ENCODE measurements at regions of chr12 and their contacts with region 1.

Region 1: DNA sequence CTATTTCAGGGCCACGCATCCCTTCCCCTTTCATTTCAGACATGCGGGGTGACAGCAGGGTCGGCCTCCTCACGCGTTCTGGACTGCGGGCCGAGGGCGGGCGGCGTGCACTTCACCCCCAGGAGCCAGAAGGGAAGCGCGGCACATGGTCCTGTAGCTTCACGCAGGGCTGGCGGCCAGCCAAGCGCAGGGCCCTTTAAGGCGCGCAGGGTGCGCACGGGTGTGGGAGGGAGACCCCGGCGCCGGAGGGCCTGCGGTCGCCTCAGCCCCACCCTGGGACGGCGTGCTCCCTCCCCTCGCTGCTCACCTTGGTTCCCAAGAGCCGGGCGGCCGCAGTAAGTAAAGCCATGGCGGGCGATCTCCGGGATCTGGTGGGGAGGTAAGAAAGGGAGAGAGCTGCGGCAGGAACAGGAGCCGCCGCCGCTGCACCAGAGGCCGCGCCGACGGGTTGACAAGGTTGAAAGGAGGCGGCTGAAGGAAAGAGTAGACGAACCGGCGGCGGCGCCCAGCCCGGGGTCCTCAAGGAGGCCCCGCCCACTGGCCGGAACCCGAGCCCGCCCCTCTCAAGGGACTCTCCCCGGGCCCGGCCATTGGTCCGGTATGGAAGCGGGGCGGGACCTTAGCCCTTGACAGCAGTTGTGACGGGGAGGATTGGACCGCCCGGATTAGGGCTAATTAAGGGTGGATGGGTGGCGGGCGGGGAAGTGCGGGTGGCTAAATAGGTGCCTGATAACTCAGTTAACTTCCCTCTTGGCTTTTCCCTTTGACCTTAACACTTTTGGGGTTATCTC is at the start of gene CS:
- DNase-seq: peak; percentile 95 to 99 (median 98)
- ATAC-seq: peak; percentile 91
- H3K4me3 ChIP-seq: peak within 1 kb of the TSS; percentile 72
- H3K4me3 Mint-ChIP-seq: peak within 1 kb of the TSS; percentile 98
- H3K27ac ChIP-seq: peak within 1 kb of the TSS; percentile 91 to 96
- H3K27ac Mint-ChIP-seq: peak within 1 kb of the TSS; percentile 97
- H3K4me1 ChIP-seq: peaks cover 56% of the 10 kb centered on the region
- H3K4me1 Mint-ChIP-seq: peaks cover 68% of the 10 kb centered on the region
- H3K27me3 ChIP-seq: no peaks in the 10 kb centered on the region
- H3K27me3 Mint-ChIP-seq: no peaks in the 10 kb centered on the region
- CTCF ChIP-seq: no peak
- total RNA-seq, gene CS: 139 to 145 TPM

Region 2: GRCh38 chr12:56247923-56248322 is 52.1 kb before region 1 on chr12:
- CTCF ChIA-PET with region 1: no interaction called
- POLR2A ChIA-PET with region 1: no interaction called
- intact Hi-C with region 1: no loop called
- DNase-seq: no peak
- ATAC-seq: no peak
- H3K4me3 ChIP-seq: no peak overlapping the region
- H3K4me3 Mint-ChIP-seq: no peak overlapping the region
- H3K27ac ChIP-seq: no peak overlapping the region
- H3K27ac Mint-ChIP-seq: no peak overlapping the region
- H3K4me1 ChIP-seq: no peaks in the 10 kb centered on the region
- H3K4me1 Mint-ChIP-seq: no peaks in the 10 kb centered on the region
- H3K27me3 ChIP-seq: no peaks in the 10 kb centered on the region
- H3K27me3 Mint-ChIP-seq: no peaks in the 10 kb centered on the region
- CTCF ChIP-seq: no peak

Region 3: DNA sequence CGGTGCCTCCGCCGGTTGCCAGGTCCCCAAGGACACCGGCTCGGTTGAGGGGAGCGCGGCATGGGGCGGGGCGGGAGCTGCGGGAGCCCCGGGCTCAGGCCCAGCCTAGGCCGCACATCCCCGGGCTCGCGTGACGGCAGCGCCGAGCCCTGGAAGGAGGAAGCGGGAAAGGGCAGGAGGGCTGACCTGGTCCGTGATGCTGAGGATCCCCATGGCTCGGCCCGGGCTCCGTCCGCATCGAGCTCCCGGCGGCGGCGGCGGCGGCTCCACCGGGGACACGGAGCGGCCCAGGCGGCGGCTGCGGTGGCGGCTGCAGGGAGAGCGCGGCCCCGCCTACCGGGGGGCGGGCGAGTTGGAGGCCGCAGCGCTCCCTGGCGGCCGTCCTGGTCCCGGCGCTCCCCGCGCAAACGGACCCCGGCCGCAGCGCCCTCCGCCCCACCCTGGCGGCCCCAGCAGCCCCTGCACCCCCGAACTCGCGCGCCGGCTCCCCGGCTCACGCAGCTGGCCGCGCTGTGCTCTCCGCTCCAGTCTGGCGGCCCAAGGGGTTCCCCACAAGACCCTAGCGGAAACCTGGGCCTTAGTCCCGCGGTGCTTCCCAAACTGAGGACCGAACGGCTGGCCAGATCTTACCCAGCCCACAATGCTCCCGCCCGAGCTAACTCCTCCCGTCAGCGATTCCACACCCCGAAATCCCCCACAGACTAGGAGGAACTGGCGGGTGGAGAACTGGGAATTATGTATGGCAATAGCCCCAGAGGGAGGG is 41.8 kb before region 1 on chr12 and contains the start of gene ANKRD52:
- CTCF ChIA-PET with region 1: interaction called, 20 read pairs
- POLR2A ChIA-PET with region 1: interaction called, 4 read pairs
- intact Hi-C with region 1: loop called in 1 of 2 experiments (anchors 2 kb)
- DNase-seq: peak; percentile 59 to 94 (median 75)
- ATAC-seq: peak; percentile 94
- H3K4me3 ChIP-seq: peak within 1 kb of the TSS; percentile 96
- H3K4me3 Mint-ChIP-seq: peak within 1 kb of the TSS; percentile 98
- H3K27ac ChIP-seq: peak within 1 kb of the TSS; percentile 31 to 58
- H3K27ac Mint-ChIP-seq: peak within 1 kb of the TSS; percentile 77
- H3K4me1 ChIP-seq: peaks cover 27% of the 10 kb centered on the region
- H3K4me1 Mint-ChIP-seq: peaks cover 20% of the 10 kb centered on the region
- H3K27me3 ChIP-seq: no peaks in the 10 kb centered on the region
- H3K27me3 Mint-ChIP-seq: no peaks in the 10 kb centered on the region
- CTCF ChIP-seq: peak; percentile 26
- total RNA-seq, gene ANKRD52: 23.9 to 30.8 TPM

Region 4: GRCh38 chr12:56266693-56267442 is 33.2 kb before region 1 on chr12 and contains the start of gene COQ10A:
- CTCF ChIA-PET with region 1: interaction called, 3 read pairs
- POLR2A ChIA-PET with region 1: interaction called, 25 read pairs
- intact Hi-C with region 1: loop called (anchors 1 to 2 kb)
- DNase-seq: peak; percentile 77 to 95 (median 88)
- ATAC-seq: peak; percentile 88
- H3K4me3 ChIP-seq: peak within 1 kb of the TSS; percentile 72
- H3K4me3 Mint-ChIP-seq: peak within 1 kb of the TSS; percentile 96
- H3K27ac ChIP-seq: peak within 1 kb of the TSS; percentile 91 to 96
- H3K27ac Mint-ChIP-seq: peak within 1 kb of the TSS; percentile 91
- H3K4me1 ChIP-seq: peaks cover 16% of the 10 kb centered on the region
- H3K4me1 Mint-ChIP-seq: peaks cover 17% of the 10 kb centered on the region
- H3K27me3 ChIP-seq: no peaks in the 10 kb centered on the region
- H3K27me3 Mint-ChIP-seq: no peaks in the 10 kb centered on the region
- CTCF ChIP-seq: peak; percentile 64
- total RNA-seq, gene COQ10A: 27.6 to 29.2 TPM

Region 5: DNA sequence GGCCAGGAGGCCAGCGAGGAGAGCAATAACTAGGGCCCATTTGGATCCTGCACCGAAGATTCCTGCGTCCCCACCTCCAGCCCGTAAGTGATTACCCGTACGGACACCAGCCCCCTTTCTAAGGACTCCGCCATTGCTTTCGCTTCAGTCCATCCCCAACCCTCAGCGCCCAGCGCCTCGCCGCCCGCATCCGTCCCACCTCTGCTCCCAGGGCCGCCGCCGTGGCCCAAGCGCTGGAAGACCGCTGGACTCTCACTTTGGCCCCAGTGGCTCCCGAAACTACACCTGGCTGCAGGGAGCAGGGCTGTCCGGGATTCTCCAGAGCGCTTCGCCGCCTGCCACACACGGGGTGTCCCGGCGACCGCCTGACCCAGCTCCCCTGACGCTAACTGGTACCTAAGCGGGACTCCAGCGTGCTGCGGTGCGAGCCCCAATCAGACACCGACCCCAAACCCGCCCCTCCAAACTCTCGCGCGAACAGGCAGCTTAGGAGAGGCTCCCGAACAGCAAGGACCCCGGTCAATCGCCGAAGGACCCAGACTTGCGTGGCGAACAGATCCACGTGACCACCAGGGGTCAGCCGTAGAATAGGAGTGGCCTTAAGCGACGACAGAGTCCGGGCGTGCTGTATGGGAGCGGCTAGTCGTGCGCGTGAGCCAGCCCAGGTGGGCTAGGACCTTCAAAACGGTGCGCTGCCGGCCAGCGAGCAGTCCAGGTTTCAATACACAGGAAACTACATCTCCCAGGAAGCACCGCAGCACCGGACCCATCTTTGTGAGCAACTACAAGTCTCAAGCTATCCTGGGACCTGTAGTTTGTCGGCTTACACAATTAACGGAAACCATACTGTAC is 15.8 kb after region 1 on chr12 and contains the start of gene CNPY2:
- CTCF ChIA-PET with region 1: interaction called, 4 read pairs
- POLR2A ChIA-PET with region 1: interaction called, 31 read pairs
- intact Hi-C with region 1: loop called in 1 of 2 experiments (anchors 1 kb)
- DNase-seq: peak; percentile 86 to 96 (median 90)
- ATAC-seq: peak; percentile 93
- H3K4me3 ChIP-seq: peak within 1 kb of the TSS; percentile 100
- H3K4me3 Mint-ChIP-seq: peak within 1 kb of the TSS; percentile 99
- H3K27ac ChIP-seq: peak within 1 kb of the TSS; percentile 84 to 98
- H3K27ac Mint-ChIP-seq: peak within 1 kb of the TSS; percentile 98
- H3K4me1 ChIP-seq: peaks cover 17% of the 10 kb centered on the region
- H3K4me1 Mint-ChIP-seq: peaks cover 19% of the 10 kb centered on the region
- H3K27me3 ChIP-seq: no peaks in the 10 kb centered on the region
- H3K27me3 Mint-ChIP-seq: no peaks in the 10 kb centered on the region
- CTCF ChIP-seq: no peak
- total RNA-seq, gene CNPY2: 30.5 to 33.4 TPM

Measured in CD4-positive, alpha-beta T cell (primary cell).